ENCODE measurements at regions of chr1 and their contacts with region 1.

Region 1: DNA sequence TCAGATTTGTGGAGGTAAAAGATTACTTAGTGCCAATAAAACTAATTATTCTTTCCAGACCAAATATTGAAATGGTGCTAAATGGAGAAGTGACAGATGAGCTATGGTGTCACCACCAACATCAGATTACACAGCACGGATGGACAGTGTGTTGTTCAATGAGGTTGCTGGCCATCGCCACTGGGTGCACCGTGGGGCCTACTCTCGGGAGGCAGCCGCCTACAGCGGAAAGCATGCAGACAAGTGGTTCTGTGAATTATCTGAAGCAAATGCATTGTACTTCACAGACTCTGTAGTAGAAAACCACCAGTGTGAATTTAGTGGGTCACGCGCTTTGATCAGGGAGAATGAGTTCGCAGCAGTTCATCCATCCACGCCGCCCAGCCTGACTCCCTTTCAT is 42.3 kb downstream of the GNG4 start:
- DNase-seq: no peak
- H3K4me3 ChIP-seq: no peak overlapping the region
- H3K27ac ChIP-seq: no peak overlapping the region
- H3K4me1 ChIP-seq: no peaks in the 10 kb centered on the region
- H3K27me3 ChIP-seq: no peaks in the 10 kb centered on the region
- CTCF ChIP-seq: no peak
- POLR2A ChIP-seq: no peak

Region 2: GRCh38 chr1:234230414-234230862 is 1376.8 kb before region 1 on chr1:
- intact Hi-C with region 1: loop called (anchors 5 kb)
- DNase-seq: no peak
- H3K4me3 ChIP-seq: no peak overlapping the region
- H3K27ac ChIP-seq: no peak overlapping the region
- H3K4me1 ChIP-seq: no peaks in the 10 kb centered on the region
- H3K27me3 ChIP-seq: no peaks in the 10 kb centered on the region
- CTCF ChIP-seq: no peak
- POLR2A ChIP-seq: no peak

Region 3: DNA sequence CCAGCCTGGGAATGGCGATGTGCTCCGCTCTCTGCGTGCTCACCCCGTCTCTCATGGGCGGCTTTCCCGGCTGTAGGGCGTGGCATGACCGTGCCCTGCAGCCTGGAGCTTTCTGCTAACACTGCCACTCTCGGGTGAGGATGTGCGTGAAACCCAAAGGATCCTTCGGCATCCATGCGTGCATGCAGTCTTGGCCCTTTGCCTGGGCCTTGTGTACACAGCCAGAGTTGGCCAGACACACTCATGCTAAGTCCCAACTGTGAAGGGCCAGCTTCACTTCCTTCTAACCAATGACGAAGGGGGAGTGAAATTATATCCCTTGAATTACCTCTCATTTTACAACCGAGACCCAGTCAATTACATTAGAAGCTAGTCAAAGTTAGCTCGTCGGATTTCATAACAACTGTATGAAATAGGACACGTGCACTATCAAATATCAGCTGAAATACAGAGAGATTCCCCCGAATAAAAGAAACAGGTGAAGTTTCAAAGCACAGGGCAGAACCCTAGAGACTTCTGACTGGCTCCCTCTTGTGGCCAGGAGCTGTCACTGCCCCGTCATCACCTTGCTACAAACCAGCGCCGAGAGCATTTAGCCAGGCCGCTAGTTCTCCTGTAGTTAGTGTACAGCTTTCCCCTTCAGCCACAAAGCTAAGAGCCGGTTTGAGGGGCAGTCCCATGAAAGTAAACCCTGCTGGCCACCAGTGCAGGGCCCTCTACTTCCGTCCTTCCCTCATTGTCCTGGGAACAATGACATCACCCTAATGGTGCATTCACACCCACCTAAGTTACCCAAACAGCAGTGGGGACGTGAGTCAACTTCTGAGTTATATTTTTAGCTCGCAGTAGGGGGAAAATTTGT is 1297.5 kb before region 1 on chr1:
- intact Hi-C with region 1: no loop called
- DNase-seq: no peak
- H3K4me3 ChIP-seq: no peak overlapping the region
- H3K27ac ChIP-seq: no peak overlapping the region
- H3K4me1 ChIP-seq: no peaks in the 10 kb centered on the region
- H3K27me3 ChIP-seq: no peaks in the 10 kb centered on the region
- CTCF ChIP-seq: peak; percentile 38 to 70 (median 46)
- POLR2A ChIP-seq: no peak

Region 4: GRCh38 chr1:235624721-235625333 is 17.5 kb after region 1 on chr1:
- intact Hi-C with region 1: no loop called
- DNase-seq: no peak
- H3K4me3 ChIP-seq: no peak overlapping the region
- H3K27ac ChIP-seq: no peak overlapping the region
- H3K4me1 ChIP-seq: no peaks in the 10 kb centered on the region
- H3K27me3 ChIP-seq: no peaks in the 10 kb centered on the region
- CTCF ChIP-seq: no peak
- POLR2A ChIP-seq: no peak

Measured in vagina (tissue), 2 donors.